ENCODE measurements at regions of chr16 and their contacts with region 1.

Region 1: GRCh38 chr16:14202697-14203096 is 131.6 kb downstream of the MRTFB start:
- DNase-seq: no peak
- H3K4me3 ChIP-seq: peak overlapping the region in 2 of 3 donors; percentile 0 to 9
- H3K27ac ChIP-seq: peak overlapping the region; percentile 50 to 74
- H3K4me1 ChIP-seq: peaks cover 0 to 9% of the 10 kb centered on the region in 2 donors
- H3K27me3 ChIP-seq: no peaks in the 10 kb centered on the region
- CTCF ChIP-seq: peak; percentile 33 to 51 (median 46)
- POLR2A ChIP-seq: no peak

Region 2: GRCh38 chr16:13997933-13998332 is 204.8 kb before region 1 on chr16:
- intact Hi-C with region 1: loop called (anchors 10 kb)
- DNase-seq: no peak
- H3K4me3 ChIP-seq: no peak overlapping the region
- H3K27ac ChIP-seq: no peak overlapping the region
- H3K4me1 ChIP-seq: peaks cover 0 to 3% of the 10 kb centered on the region in 2 donors
- H3K27me3 ChIP-seq: no peaks in the 10 kb centered on the region
- CTCF ChIP-seq: no peak
- POLR2A ChIP-seq: no peak

Measured in breast epithelium (tissue), 4 donors.